Sigmoid colon (tissue), 7 donors: ENCODE measurements at regions of chr12 and their contacts with region 1.

Region 1: DNA sequence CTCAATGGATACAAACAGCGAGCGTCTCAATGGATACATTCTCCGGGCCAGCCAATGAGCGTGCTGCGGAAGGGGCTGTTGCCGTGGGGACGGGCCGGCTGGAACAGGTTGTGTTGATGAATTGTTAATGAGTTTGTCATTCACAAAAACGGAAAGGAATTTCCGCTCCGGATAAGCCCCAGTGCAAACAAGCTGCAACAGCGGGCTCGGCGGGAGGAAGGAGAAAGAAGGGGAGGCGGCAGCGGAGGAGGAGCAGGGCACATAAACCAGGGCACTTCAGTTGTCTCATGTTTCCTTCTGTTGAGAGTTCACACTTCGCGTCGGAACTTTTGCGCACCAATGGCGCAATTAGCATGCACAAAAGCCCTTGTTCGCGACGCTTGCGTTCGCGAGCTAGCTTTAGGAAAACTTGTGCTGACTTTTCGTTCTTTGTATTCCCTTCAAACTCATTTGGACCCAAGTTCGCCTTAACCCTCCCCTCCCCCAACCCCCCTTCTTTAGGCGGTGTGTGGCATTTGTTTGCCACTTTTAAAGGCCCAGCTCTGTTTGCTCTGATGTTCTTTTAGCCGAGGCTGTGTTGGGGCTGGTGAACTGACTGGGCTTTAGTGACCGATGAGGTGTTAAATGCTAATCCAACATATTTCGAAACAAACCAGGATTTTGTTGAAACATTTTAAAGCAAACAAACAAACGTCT is at the start of gene DUSP6:
- DNase-seq: peak; percentile 97
- H3K4me3 ChIP-seq: peak within 1 kb of the TSS; percentile 66 to 91 (median 87)
- H3K27ac ChIP-seq: peak within 1 kb of the TSS; percentile 94 to 100 (median 95)
- H3K4me1 ChIP-seq: peaks cover 0 to 31% (median 10%) of the 10 kb centered on the region in 4 donors
- H3K27me3 ChIP-seq: no peaks in the 10 kb centered on the region
- CTCF ChIP-seq: no peak
- EP300 ChIP-seq: peak in 1 of 4 donors; percentile 25
- POLR2A ChIP-seq: peak in 1 of 2 donors; percentile 52
- total RNA-seq, gene DUSP6: 31.0 to 36.4 (median 33.0) TPM

Region 2: DNA sequence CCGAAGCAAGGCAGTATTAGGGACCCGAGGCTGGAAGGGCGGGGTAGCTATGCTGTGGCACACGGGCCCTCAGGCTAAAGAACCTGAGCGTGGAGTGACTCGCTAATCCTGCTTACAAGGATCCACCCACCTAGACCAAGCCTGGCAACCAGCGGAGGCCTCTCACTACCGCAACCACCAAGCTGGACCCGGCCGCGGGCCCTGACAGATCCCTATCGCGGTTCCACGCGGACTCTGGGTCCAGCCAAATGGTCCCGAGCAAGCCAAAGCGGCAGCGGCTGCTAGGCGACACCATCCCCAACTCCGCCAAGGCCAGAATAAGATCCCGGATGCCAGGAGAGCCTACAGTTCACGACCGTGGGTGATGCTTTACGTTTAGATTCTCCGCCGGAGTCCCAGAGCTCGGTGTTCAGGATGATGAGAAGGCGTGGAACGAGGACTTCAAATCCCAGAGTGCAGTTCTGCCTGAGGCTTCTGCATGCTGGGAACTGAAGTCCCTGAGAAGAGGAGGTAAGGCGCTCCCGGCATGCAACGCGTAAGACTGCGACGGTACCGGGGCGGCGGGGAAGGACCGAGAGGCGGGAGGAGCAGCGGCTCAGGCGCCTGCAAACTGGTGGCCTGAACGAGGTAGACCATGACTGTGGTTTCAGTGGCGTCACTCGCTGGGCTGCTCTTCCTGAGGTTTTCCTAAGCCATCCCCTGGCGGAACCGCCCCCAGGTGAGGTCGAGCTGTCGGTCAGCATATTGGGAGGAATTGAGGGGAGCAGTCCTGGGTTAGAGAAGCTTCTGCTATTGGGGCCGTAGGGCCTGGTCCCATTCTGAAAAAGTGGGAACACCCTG is 1210.7 kb before region 1 on chr12 and contains the starts of genes CEP290 and TMTC3:
- intact Hi-C with region 1: loop called (anchors 10 kb)
- DNase-seq: peak; percentile 97
- H3K4me3 ChIP-seq: peak within 1 kb of the TSS; percentile 60 to 72 (median 66)
- H3K27ac ChIP-seq: peak within 1 kb of the TSS; percentile 74 to 81 (median 78)
- H3K4me1 ChIP-seq: peaks cover 0 to 33% (median 16%) of the 10 kb centered on the region in 4 donors
- H3K27me3 ChIP-seq: no peaks in the 10 kb centered on the region
- CTCF ChIP-seq: no peak
- EP300 ChIP-seq: peak in 1 of 4 donors; percentile 10
- POLR2A ChIP-seq: peak; percentile 43 to 66
- total RNA-seq, gene CEP290: 14.1 to 17.5 (median 15.9) TPM
- total RNA-seq, gene TMTC3: 14.4 to 22.2 (median 20.7) TPM

Region 3: GRCh38 chr12:89051065-89051677 is 301.5 kb before region 1 on chr12:
- intact Hi-C with region 1: loop called (anchors 2 kb)
- DNase-seq: no peak
- H3K4me3 ChIP-seq: no peak overlapping the region
- H3K27ac ChIP-seq: no peak overlapping the region
- H3K4me1 ChIP-seq: no peaks in the 10 kb centered on the region
- H3K27me3 ChIP-seq: no peaks in the 10 kb centered on the region
- CTCF ChIP-seq: peak; percentile 60 to 79 (median 71)
- EP300 ChIP-seq: no peak
- POLR2A ChIP-seq: no peak

Region 4: DNA sequence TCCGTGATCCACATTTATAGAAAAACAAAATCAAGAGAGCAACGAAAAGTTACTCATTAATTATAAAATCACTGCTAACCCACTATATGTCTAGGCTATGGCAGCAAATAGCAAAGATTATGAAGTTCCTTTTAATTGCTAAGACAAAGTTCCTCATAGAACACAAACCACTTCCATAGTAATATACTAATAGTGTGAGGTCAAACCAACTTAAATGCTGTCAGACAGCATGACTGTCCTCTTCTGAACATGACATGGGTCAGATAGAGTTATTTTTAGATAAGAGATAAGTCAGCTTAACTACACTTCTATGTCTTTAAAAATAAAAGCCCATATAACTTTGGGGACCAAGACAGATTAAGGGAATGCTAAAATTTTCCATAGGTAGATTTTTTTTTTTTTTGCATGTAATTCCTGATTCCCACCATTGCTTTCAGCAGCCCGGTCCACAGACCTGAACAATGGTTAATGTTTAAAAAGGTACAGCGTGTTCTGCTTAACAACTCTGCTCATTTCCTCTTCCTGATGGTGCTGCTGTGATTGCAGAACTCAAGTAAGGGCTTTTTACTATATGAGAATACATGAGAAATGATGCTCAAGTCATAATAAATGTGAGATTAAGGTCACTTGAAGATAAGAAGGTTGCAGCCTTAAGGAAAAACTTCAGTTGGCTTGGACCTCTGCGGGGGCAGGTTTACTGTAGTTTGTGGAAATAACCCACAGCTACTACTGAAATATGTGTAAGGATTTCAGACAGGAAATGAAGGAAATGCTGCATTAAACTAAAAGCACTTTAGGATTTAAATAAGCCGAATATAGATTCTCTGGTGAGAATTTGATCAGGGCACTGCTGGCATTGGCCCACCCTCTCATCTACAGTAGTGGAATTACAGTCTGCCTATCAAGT is 37.4 kb after region 1 on chr12:
- intact Hi-C with region 1: no loop called
- DNase-seq: no peak
- H3K4me3 ChIP-seq: no peak overlapping the region
- H3K27ac ChIP-seq: peak overlapping the region; percentile 30 to 47 (median 38)
- H3K4me1 ChIP-seq: peaks cover 0 to 11% (median 2%) of the 10 kb centered on the region in 4 donors
- H3K27me3 ChIP-seq: no peaks in the 10 kb centered on the region
- CTCF ChIP-seq: no peak
- EP300 ChIP-seq: peak in 1 of 4 donors; percentile 53
- POLR2A ChIP-seq: no peak

Region 5: GRCh38 chr12:89451841-89452251 is 99.2 kb after region 1 on chr12:
- intact Hi-C with region 1: loop called (anchors 2 kb)
- DNase-seq: peak; percentile 77
- H3K4me3 ChIP-seq: peak overlapping the region in 1 of 4 donors; percentile 8
- H3K27ac ChIP-seq: peak overlapping the region; percentile 75 to 88 (median 82)
- H3K4me1 ChIP-seq: peaks cover 0 to 55% (median 46%) of the 10 kb centered on the region in 4 donors
- H3K27me3 ChIP-seq: no peaks in the 10 kb centered on the region
- CTCF ChIP-seq: no peak
- EP300 ChIP-seq: no peak
- POLR2A ChIP-seq: no peak

Region 6: GRCh38 chr12:89709157-89709994 is 356.7 kb after region 1 on chr12:
- intact Hi-C with region 1: loop called (anchors 5 kb)
- DNase-seq: peak; percentile 100
- H3K4me3 ChIP-seq: peak overlapping the region; percentile 87 to 95 (median 90)
- H3K27ac ChIP-seq: peak overlapping the region; percentile 97 to 100 (median 98)
- H3K4me1 ChIP-seq: peaks cover 0 to 14% (median 11%) of the 10 kb centered on the region in 4 donors
- H3K27me3 ChIP-seq: no peaks in the 10 kb centered on the region
- CTCF ChIP-seq: no peak
- EP300 ChIP-seq: peak; percentile 54 to 91 (median 85)
- POLR2A ChIP-seq: peak; percentile 97 to 99